ENCODE measurements at regions of chrX and their contacts with region 1.

Region 1: GRCh38 chrX:54921427-54922021 is 900 bp downstream of the TRO start:
- DNase-seq: no peak
- H3K4me3 ChIP-seq: peak overlapping the region; percentile 57
- H3K27me3 ChIP-seq: no peaks in the 10 kb centered on the region
- CTCF ChIP-seq: no peak

Region 2: DNA sequence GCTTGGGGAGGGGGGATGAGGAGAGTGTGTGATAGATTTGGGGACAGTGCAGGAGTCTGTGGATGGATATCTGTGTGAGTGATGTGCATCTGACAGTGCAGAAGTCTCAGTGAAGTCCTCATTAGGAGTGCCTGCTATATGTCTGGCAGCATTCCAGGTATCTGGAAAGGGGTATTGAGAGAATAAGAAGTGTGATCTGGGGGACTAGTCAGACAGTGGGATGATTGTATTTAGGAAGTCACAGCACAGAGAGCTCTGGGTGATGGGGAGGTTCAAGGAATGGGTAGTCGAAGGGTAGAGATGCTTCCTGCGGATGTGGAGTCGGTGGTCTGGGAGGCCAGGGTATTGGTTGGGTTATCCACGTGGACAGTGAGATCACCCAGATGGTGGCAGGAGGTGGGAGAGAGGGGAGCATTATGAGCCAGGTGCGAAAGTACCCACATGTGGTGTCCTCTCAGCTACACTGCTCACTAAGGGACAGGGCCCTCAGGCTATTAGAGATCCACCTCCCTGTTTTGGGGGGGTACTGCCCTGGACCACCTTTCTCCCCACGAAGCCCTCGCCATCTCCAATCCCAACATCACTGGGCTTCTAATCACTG is 104.2 kb before region 1 on chrX:
- CTCF ChIA-PET with region 1: no interaction called
- POLR2A ChIA-PET with region 1: interaction called, 11 read pairs
- DNase-seq: no peak
- H3K4me3 ChIP-seq: no peak overlapping the region
- H3K27me3 ChIP-seq: no peaks in the 10 kb centered on the region
- CTCF ChIP-seq: no peak

Measured in BJ (cell line).